Activated CD4-positive, alpha-beta T cell treated with anti-CD3 and anti-CD28 coated beads for 36 hours (primary cell): ENCODE measurements at regions of chrX and their contacts with region 1.

Region 1: DNA sequence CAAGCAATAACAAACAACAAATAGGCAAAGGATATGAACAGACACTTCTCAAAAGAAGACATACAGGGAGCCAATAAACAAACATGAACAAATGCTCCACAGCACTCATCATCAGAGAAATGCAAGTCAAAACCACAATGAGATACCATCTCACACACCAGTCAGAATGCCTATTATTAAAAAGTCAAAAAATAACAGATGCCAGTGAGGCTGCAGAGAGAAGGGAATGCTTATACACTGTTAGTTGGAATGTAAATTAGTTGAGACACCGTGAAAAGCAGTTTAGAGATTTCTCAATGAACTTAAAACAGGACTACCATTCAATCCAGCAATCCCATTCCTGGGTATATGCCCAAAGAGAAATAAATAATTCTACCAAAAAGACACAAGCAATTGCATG is 129.8 kb upstream of the MAGEB2 start:
- DNase-seq: no peak
- ATAC-seq: no peak
- H3K4me3 Mint-ChIP-seq: no peak overlapping the region
- H3K27ac Mint-ChIP-seq: no peak overlapping the region
- H3K4me1 Mint-ChIP-seq: no peaks in the 10 kb centered on the region
- H3K27me3 Mint-ChIP-seq: no peaks in the 10 kb centered on the region

Region 2: GRCh38 chrX:30039768-30040167 is 45.8 kb before region 1 on chrX:
- CTCF ChIA-PET with region 1: no interaction called
- POLR2A ChIA-PET with region 1: no interaction called
- intact Hi-C with region 1: loop called in 1 of 2 experiments (anchors 10 kb)
- DNase-seq: no peak
- ATAC-seq: no peak
- H3K4me3 Mint-ChIP-seq: no peak overlapping the region
- H3K27ac Mint-ChIP-seq: no peak overlapping the region
- H3K4me1 Mint-ChIP-seq: no peaks in the 10 kb centered on the region
- H3K27me3 Mint-ChIP-seq: no peaks in the 10 kb centered on the region

Region 3: DNA sequence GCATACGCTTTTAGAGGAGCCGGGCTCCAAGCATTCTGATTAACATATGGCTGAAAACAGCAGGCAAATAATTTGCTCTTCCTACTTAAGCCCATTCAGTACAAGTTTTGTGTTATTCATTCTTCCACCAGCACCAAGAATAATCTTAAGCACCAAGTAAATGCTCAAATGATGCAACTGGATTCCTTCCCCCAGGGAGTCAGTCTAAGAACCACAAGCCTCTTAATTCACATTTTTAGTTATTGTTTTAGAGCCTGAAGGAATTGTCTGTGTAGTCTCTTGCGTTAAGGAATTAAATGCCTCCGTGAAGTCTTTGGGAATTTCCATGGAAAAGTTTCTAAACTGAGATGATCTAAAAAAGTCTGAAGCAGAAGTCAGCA is 68.3 kb after region 1 on chrX:
- CTCF ChIA-PET with region 1: no interaction called
- POLR2A ChIA-PET with region 1: no interaction called
- intact Hi-C with region 1: no loop called
- DNase-seq: no peak
- ATAC-seq: no peak
- H3K4me3 Mint-ChIP-seq: no peak overlapping the region
- H3K27ac Mint-ChIP-seq: no peak overlapping the region
- H3K4me1 Mint-ChIP-seq: no peaks in the 10 kb centered on the region
- H3K27me3 Mint-ChIP-seq: no peaks in the 10 kb centered on the region